ENCODE measurements at regions of chr1 and their contacts with region 1.

Region 1: GRCh38 chr1:156740679-156741612 is at the start of gene MRPL24:
- DNase-seq: peak; percentile 99
- ATAC-seq: peak; percentile 93
- H3K4me3 ChIP-seq: peak within 1 kb of the TSS; percentile 68
- H3K27ac ChIP-seq: peak within 1 kb of the TSS; percentile 76
- H3K4me1 ChIP-seq: peaks cover 5% of the 10 kb centered on the region
- H3K27me3 ChIP-seq: no peaks in the 10 kb centered on the region
- CTCF ChIP-seq: no peak
- EP300 ChIP-seq: no peak; a peak in 2 of 4 replicates
- POLR2A ChIP-seq: peak; percentile 89
- RAD21 ChIP-seq: no peak
- polyA plus RNA-seq, gene MRPL24: 245 to 269 TPM

Region 2: DNA sequence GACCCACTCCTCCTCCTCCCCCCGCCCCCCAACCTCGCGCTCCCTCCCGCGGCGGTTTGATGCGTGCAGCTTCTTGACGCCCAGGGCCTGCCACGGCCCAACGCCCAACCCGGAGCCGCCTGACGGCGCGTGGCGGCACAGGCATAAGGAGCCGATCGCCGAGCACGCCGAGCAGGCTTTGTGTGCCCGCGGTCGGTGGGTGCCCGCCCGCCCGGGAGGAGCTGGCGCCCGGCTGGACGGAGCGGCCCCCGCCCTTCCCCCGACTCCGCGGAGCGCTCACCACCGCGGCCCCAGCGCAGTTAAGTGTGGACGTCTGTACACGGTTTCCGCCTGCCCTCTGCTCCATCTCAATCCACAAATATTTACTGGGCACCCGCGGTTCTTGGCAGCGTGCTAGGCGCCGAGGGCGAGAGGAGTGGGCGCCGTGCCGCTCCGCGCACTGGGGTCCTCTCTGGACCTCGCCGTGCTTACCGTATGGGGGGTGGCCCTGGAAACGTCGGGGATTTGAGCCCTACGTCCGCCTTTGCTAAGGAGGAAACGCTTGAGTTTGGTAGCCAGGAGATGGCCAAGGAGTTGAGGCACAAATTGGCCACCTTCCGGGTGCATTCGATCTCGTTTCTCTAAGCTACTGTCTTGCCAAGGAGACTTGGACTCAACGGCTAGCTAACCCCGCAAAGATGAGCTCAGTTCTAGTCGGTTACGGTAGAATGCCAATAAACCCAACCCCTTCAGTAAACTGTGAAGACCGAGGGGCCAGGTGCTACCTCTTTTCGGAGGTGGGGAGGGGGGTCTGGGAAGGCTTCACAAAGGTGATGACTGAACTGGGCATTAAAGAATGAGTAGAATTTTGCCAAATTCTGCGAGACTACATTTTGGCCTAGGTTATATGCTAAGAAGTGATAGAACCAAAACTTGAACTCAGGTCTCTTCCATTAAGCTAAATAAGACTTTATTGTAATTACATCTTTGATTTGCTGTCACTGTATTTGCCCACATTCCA is 11.1 kb after region 1 on chr1:
- CTCF ChIA-PET with region 1: interaction called, 10 read pairs
- POLR2A ChIA-PET with region 1: interaction called, 28 read pairs
- RAD21 ChIA-PET with region 1: interaction called, 21 read pairs
- SMC1A ChIA-PET with region 1: interaction called, 4 read pairs
- in situ Hi-C with region 1: no loop called
- intact Hi-C with region 1: loop called (anchors 1 kb)
- DNase-seq: peak; percentile 82
- ATAC-seq: peak; percentile 80
- H3K4me3 ChIP-seq: peak overlapping the region; percentile 81
- H3K27ac ChIP-seq: peak overlapping the region; percentile 99
- H3K4me1 ChIP-seq: peaks cover 25% of the 10 kb centered on the region
- H3K27me3 ChIP-seq: no peaks in the 10 kb centered on the region
- CTCF ChIP-seq: 0 out of 6 replicates have a peak, but pooled peaks of 1 of the 3 experiments have one; percentile 3
- EP300 ChIP-seq: no peak
- POLR2A ChIP-seq: peak; percentile 84
- RAD21 ChIP-seq: no peak